Aorta (tissue), 5 donors: ENCODE measurements at regions of chr6 and their contacts with region 1.

Region 1: GRCh38 chr6:43769526-43770416 is at the start of gene VEGFA:
- DNase-seq: peak; percentile 95 to 97
- ATAC-seq: peak; percentile 91
- H3K4me3 ChIP-seq: peak within 1 kb of the TSS; percentile 68 to 87
- H3K27ac ChIP-seq: peak within 1 kb of the TSS in 1 of 2 donors; percentile 58
- H3K4me1 ChIP-seq: no peaks in the 10 kb centered on the region
- H3K27me3 ChIP-seq: peaks cover 0 to 1% of the 10 kb centered on the region in 2 donors
- total RNA-seq, gene VEGFA: 107 to 247 TPM

Region 2: DNA sequence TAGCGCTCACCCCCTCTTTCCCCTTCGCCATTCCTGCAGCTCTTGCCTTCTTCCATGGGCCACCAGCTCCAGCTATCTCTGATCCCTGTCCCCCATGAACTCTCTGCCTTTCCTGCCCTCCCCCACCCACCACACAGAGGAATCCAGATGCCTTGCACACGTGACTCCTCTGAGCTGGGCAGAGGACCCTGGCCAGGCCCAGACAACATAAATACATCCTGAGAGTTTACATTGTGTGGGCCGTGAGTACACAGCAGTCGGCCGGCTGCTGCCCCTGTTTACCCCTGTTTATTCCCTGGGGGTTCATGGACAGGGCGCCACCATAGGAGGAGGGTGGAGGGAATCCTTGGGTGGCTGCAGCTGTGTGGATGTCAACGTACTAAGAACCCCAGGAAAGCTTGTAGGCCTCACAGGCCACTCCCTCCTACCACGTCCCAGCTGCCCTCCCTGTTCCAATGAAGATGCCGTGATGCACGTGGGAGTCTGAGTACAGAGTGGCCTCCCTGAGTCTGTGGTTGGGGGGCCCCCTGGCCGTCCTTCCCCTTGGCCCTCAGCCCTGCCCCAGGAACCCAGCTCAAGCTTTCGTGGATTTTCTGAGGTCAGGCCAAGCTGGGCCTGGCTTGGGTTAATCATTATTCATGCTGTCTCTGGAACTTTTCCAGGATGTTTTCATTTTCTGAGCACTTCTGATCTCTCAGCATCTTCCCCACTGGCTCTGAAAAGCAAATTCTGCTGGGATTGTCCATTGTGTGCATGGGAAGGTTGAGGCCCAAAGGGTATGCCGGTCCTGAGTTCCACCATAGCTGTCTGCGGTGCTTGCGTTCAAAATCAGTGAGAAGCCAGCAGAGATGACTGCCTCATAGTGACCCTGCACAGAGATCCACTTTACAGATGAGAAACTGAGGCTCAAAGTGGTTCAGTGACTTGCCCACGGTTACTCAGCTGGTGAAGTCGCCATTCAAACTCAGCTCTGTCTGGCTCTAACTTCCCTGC is 221.2 kb after region 1 on chr6:
- intact Hi-C with region 1: loop called in 1 of 2 experiments (anchors 5 kb)
- DNase-seq: peak; percentile 42 to 62
- ATAC-seq: no peak
- H3K4me3 ChIP-seq: no peak overlapping the region
- H3K27ac ChIP-seq: no peak overlapping the region
- H3K4me1 ChIP-seq: no peaks in the 10 kb centered on the region
- H3K27me3 ChIP-seq: no peaks in the 10 kb centered on the region

Region 3: DNA sequence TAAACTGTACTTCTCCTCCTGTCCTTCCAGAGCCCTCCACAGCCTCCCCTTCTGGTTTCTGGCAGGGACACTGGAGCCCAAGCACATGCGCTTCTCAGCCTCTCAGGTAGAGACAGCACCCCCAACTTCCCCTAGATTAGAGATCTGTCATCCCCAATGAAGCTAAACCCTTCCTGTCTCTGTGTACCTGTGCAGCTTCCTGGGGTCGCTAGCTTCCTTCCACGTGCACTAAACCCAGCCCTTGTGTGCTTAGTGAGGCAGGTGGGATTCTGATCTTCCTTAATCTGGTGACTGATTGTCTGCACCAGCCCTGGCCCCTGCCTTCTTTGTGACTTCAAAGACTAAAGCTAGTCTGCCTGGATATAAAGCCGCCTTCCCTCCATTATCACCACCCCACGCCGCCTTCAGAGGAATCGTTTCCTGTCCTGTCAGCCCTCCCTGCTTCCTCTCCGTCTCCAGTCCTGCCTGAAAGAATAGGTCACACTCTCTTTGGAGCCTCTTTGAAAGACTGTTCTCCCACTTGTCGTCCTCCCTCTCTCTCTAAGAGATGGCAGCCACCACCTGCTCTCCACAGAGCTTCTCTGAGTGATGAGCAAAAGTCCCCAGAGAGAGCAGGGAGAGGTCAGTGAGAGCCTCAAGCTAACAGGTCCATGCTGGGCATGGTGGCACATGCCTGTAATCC is 416.3 kb after region 1 on chr6:
- intact Hi-C with region 1: no loop called
- DNase-seq: peak in 1 of 2 donors; percentile 46
- ATAC-seq: peak; percentile 19
- H3K4me3 ChIP-seq: no peak overlapping the region
- H3K27ac ChIP-seq: no peak overlapping the region
- H3K4me1 ChIP-seq: no peaks in the 10 kb centered on the region
- H3K27me3 ChIP-seq: no peaks in the 10 kb centered on the region

Region 4: GRCh38 chr6:44246663-44247337 is 477.0 kb after region 1 on chr6 and contains the start of gene HSP90AB1:
- intact Hi-C with region 1: loop called in 1 of 2 experiments (anchors 10 kb)
- DNase-seq: peak; percentile 96
- ATAC-seq: peak; percentile 95
- H3K4me3 ChIP-seq: peak within 1 kb of the TSS; percentile 91 to 97
- H3K27ac ChIP-seq: peak within 1 kb of the TSS; percentile 46 to 89
- H3K4me1 ChIP-seq: no peaks in the 10 kb centered on the region
- H3K27me3 ChIP-seq: no peaks in the 10 kb centered on the region
- total RNA-seq, gene HSP90AB1: 490 to 636 TPM